Gastrocnemius medialis (tissue), 4 donors: ENCODE measurements at regions of chr17 and their contacts with region 1.

Region 1: GRCh38 chr17:21126645-21127510 is at the start of gene DHRS7B:
- DNase-seq: peak; percentile 95
- ATAC-seq: peak; percentile 93 to 96
- H3K4me3 ChIP-seq: peak within 1 kb of the TSS; percentile 80 to 99 (median 90)
- H3K27ac ChIP-seq: peak within 1 kb of the TSS; percentile 95 to 100 (median 96)
- H3K4me1 ChIP-seq: peaks cover 30 to 36% of the 10 kb centered on the region in 2 donors
- H3K27me3 ChIP-seq: no peaks in the 10 kb centered on the region
- CTCF ChIP-seq: peak in 1 of 5 experiments; percentile 16
- POLR2A ChIP-seq: peak; percentile 78 to 90
- total RNA-seq, gene DHRS7B: 35.7 to 73.2 (median 43.2) TPM

Region 2: GRCh38 chr17:21043286-21044232 is 83.3 kb before region 1 on chr17:
- in situ Hi-C with region 1: no loop called
- intact Hi-C with region 1: no loop called
- DNase-seq: peak in 1 of 2 donors; percentile 95
- ATAC-seq: peak; percentile 82
- H3K4me3 ChIP-seq: peak overlapping the region; percentile 61 to 97 (median 82)
- H3K27ac ChIP-seq: peak overlapping the region; percentile 86 to 98 (median 96)
- H3K4me1 ChIP-seq: peaks cover 25 to 33% of the 10 kb centered on the region in 2 donors
- H3K27me3 ChIP-seq: no peaks in the 10 kb centered on the region
- CTCF ChIP-seq: peak; percentile 94 to 98 (median 97)
- POLR2A ChIP-seq: no peak

Region 3: DNA sequence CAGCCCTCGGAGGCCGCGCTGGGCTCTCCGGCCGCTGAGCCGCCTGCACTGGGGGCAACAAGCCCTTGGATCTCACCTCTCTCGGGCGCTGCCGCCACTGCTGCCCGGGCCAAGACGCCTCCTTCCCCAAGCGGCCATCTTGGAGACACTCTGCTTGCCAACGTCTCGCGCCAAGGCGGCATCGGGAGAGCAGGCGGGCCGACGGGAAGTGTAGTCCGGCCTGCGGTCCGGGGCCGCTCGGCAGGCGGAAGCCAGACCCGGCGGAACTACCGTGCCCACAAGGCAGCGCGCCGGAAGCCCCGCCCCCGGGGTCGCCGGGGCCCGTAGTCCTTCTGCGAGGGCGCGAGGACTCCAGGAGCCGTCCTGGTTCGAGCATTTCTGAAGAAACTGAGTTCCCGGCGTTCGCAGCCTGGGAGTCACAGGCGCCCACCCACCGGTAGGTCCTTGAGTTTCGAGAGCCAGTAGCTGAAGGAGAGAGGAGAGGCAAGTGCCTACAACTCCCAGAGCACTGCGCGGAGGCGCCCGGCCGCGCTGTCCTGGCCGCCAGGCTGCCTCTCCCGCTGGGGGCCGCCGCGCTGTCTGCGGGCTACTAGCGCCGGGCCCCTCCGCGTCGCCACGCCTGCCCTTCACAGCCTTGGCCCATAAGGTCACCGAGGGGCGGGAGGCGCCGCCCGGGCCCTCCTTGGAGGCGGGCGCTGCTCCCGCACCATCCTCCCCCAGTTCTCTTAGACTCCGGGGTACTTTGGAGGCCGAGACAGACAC is 87.3 kb after region 1 on chr17 and contains the start of gene TMEM11:
- in situ Hi-C with region 1: loop called in 1 of 4 experiments (anchors 10 kb)
- intact Hi-C with region 1: loop called (anchors 1 kb)
- DNase-seq: peak; percentile 95
- ATAC-seq: peak; percentile 51 to 57
- H3K4me3 ChIP-seq: peak within 1 kb of the TSS; percentile 80 to 99 (median 93)
- H3K27ac ChIP-seq: peak within 1 kb of the TSS; percentile 92 to 98 (median 96)
- H3K4me1 ChIP-seq: peaks cover 57 to 58% of the 10 kb centered on the region in 2 donors
- H3K27me3 ChIP-seq: no peaks in the 10 kb centered on the region
- CTCF ChIP-seq: peak in 2 of 5 experiments; percentile 15 to 34
- POLR2A ChIP-seq: peak; percentile 84 to 93
- total RNA-seq, gene TMEM11: 70.6 to 131 (median 90.9) TPM

Region 4: GRCh38 chr17:21239680-21240368 is 112.9 kb after region 1 on chr17:
- in situ Hi-C with region 1: loop called in 1 of 4 experiments (anchors 25 kb)
- intact Hi-C with region 1: no loop called
- DNase-seq: no peak
- ATAC-seq: peak in 1 of 2 donors; percentile 20
- H3K4me3 ChIP-seq: no peak overlapping the region
- H3K27ac ChIP-seq: peak overlapping the region; percentile 89 to 95 (median 92)
- H3K4me1 ChIP-seq: peaks cover 33 to 47% of the 10 kb centered on the region in 2 donors
- H3K27me3 ChIP-seq: no peaks in the 10 kb centered on the region
- CTCF ChIP-seq: peak; percentile 16 to 58 (median 46)
- POLR2A ChIP-seq: no peak

Region 5: DNA sequence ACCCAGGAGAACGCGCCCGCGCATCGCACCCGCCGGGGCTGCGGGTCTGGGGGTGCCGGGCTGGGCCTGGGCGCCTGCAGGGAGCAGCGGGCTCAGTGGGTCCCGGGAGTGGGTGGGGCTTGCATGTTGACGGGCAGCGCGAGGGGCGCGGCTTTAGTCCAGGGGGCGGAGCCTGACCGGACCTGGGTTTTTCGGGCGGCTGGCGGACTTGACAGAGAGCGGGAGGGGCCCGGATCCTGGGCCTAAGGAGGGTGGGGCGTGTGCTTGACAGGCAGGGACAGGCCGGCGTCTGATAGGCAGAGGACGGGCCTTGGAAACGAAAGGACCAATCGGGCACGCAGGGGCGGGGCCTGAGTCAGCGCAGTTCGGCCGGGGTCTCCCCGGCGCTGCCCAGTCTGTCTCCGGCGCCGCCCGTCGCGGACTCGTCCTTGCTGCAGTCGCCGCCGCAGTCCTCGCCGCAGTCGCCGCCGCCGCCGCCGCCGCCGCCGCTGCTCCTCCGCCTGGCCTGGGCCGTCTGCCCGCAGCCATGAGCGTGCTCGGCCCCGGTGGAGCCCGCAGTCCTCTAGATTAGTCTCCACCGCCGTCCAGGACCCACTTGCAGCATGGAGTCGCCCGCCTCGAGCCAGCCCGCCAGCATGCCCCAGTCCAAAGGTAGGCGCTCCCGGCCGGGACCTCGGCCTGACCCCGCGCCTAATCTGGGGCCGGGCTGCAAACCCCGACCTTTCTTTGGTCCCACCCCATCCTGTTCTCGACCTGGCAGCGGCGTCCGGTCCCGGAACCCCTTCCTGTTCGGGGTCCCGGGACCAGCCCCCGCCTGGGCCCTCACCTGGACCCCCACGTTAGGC is 157.7 kb after region 1 on chr17 and contains the start of gene MAP2K3:
- in situ Hi-C with region 1: loop called in 1 of 4 experiments (anchors 10 kb)
- intact Hi-C with region 1: loop called (anchors 2 kb)
- DNase-seq: peak; percentile 100
- ATAC-seq: peak; percentile 29 to 35
- H3K4me3 ChIP-seq: peak within 1 kb of the TSS; percentile 72 to 88 (median 84)
- H3K27ac ChIP-seq: peak within 1 kb of the TSS; percentile 94 to 99 (median 97)
- H3K4me1 ChIP-seq: peaks cover 58 to 62% of the 10 kb centered on the region in 2 donors
- H3K27me3 ChIP-seq: no peaks in the 10 kb centered on the region
- CTCF ChIP-seq: no peak
- POLR2A ChIP-seq: peak; percentile 98 to 99
- total RNA-seq, gene MAP2K3: 15.7 to 170 (median 63.8) TPM

Region 6: GRCh38 chr17:21419299-21420239 is 292.7 kb after region 1 on chr17:
- in situ Hi-C with region 1: no loop called
- intact Hi-C with region 1: no loop called
- DNase-seq: no peak
- ATAC-seq: no peak
- H3K4me3 ChIP-seq: no peak overlapping the region
- H3K27ac ChIP-seq: no peak overlapping the region
- H3K4me1 ChIP-seq: peaks cover 0 to 3% of the 10 kb centered on the region in 2 donors
- H3K27me3 ChIP-seq: no peaks in the 10 kb centered on the region
- CTCF ChIP-seq: no peak
- POLR2A ChIP-seq: no peak

Region 7: DNA sequence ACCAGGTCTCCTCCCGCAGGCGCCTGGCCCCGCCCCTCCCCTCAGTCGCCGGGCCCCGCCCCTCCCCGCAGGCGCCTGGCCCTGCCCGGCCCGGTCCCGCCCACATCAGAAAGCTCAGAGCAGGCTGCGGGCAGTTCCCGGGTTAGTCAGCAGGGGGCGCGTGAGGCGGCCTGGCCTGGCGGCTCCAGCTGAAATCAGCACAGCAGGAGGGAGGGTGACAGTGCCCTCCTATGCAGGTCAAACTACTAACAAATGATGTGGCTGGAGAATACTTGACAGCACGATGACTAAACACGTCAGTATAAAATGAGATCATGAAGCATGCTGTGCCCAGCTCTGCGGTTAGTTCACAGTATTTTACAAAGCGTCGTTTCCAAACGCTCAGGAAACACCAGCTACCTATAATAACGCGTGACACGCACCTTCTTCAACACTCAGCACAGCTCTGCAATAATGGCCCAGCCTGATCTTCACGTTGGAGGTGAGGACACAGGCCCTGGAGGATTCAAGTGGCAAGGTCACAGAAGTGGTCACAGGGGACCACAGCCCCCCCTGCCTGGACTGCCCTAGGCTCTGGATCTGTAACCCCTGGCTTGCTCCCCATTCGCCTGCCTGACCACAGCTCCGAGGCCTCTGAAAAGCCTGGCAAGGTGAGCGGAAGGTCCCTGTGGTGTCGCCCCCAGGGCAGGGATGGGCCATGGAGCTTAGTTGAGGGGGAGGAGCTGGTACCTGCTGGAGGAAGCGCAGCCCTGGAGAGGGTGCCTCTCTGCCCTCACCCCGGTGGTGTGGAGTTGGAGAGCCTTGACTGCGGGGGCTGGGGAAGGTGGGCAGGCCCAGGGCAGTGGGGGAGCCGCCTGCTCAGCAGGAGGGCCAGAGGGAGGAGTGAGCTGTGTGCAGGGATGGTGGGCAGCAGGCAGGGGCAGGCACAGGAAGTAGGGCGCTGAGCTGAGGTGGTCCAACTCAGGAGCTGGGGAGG is 330.5 kb after region 1 on chr17:
- in situ Hi-C with region 1: no loop called
- intact Hi-C with region 1: loop called (anchors 10 kb)
- DNase-seq: peak; percentile 76 to 89
- ATAC-seq: peak; percentile 89 to 92
- H3K4me3 ChIP-seq: no peak overlapping the region
- H3K27ac ChIP-seq: peak overlapping the region in 1 of 4 donors; percentile 35
- H3K4me1 ChIP-seq: peaks cover 4 to 10% of the 10 kb centered on the region in 2 donors
- H3K27me3 ChIP-seq: no peaks in the 10 kb centered on the region
- CTCF ChIP-seq: peak; percentile 78 to 99 (median 93)
- POLR2A ChIP-seq: no peak

Region 8: GRCh38 chr17:21573961-21574610 is 447.2 kb after region 1 on chr17:
- in situ Hi-C with region 1: no loop called
- intact Hi-C with region 1: no loop called
- DNase-seq: peak; percentile 21 to 44
- ATAC-seq: peak; percentile 60 to 66
- H3K4me3 ChIP-seq: peak overlapping the region; percentile 42 to 53 (median 50)
- H3K27ac ChIP-seq: no peak overlapping the region
- H3K4me1 ChIP-seq: no peaks in the 10 kb centered on the region
- H3K27me3 ChIP-seq: no peaks in the 10 kb centered on the region
- CTCF ChIP-seq: no peak
- POLR2A ChIP-seq: no peak